Endothelial cell of umbilical vein (primary cell): ENCODE measurements at regions of chr11 and their contacts with region 1.

Region 1: GRCh38 chr11:126334659-126335462 is 20.6 kb upstream of the ST3GAL4 start:
- DNase-seq: no peak
- H3K4me3 ChIP-seq: no peak overlapping the region
- H3K27ac ChIP-seq: peak overlapping the region; percentile 95
- H3K4me1 ChIP-seq: peaks cover 32% of the 10 kb centered on the region
- H3K27me3 ChIP-seq: no peaks in the 10 kb centered on the region
- CTCF ChIP-seq: no peak
- POLR2A ChIP-seq: no peak

Region 2: GRCh38 chr11:126211235-126212088 is 123.4 kb before region 1 on chr11 and contains the starts of genes FAM118B and RPUSD4:
- CTCF ChIA-PET with region 1: no interaction called
- POLR2A ChIA-PET with region 1: no interaction called
- dilution Hi-C with region 1: no loop called
- intact Hi-C with region 1: no loop called
- DNase-seq: peak; percentile 98
- H3K4me3 ChIP-seq: peak within 1 kb of the TSS; percentile 65 to 73 (median 72)
- H3K27ac ChIP-seq: peak within 1 kb of the TSS; percentile 36
- H3K4me1 ChIP-seq: peaks cover 17% of the 10 kb centered on the region
- H3K27me3 ChIP-seq: no peaks in the 10 kb centered on the region
- CTCF ChIP-seq: no peak
- POLR2A ChIP-seq: peak; percentile 98
- total RNA-seq, gene FAM118B: 35.3 and 35.8 TPM in 2 replicates
- total RNA-seq, gene RPUSD4: 36.5 and 40.8 TPM in 2 replicates

Region 3: GRCh38 chr11:126345759-126346585 is 11.1 kb after region 1 on chr11:
- CTCF ChIA-PET with region 1: interaction called, 7 read pairs
- POLR2A ChIA-PET with region 1: interaction called, 4 read pairs
- dilution Hi-C with region 1: no loop called
- intact Hi-C with region 1: loop called (anchors 1 kb)
- DNase-seq: peak; percentile 59
- H3K4me3 ChIP-seq: no peak overlapping the region
- H3K27ac ChIP-seq: peak overlapping the region; percentile 77
- H3K4me1 ChIP-seq: peaks cover 50% of the 10 kb centered on the region
- H3K27me3 ChIP-seq: no peaks in the 10 kb centered on the region
- CTCF ChIP-seq: no peak
- POLR2A ChIP-seq: no peak

Region 4: GRCh38 chr11:126355324-126355925 is 20.6 kb after region 1 on chr11 and contains the start of gene ST3GAL4:
- CTCF ChIA-PET with region 1: interaction called, 4 read pairs
- POLR2A ChIA-PET with region 1: interaction called, 3 read pairs
- dilution Hi-C with region 1: no loop called
- intact Hi-C with region 1: loop called (anchors 1 kb)
- DNase-seq: peak; percentile 73
- H3K4me3 ChIP-seq: peak within 1 kb of the TSS; percentile 16 to 69 (median 64)
- H3K27ac ChIP-seq: peak within 1 kb of the TSS; percentile 79
- H3K4me1 ChIP-seq: peaks cover 23% of the 10 kb centered on the region
- H3K27me3 ChIP-seq: no peaks in the 10 kb centered on the region
- CTCF ChIP-seq: no peak
- POLR2A ChIP-seq: peak; percentile 82
- total RNA-seq, gene ST3GAL4: 17.7 and 21.1 TPM in 2 replicates

Region 5: DNA sequence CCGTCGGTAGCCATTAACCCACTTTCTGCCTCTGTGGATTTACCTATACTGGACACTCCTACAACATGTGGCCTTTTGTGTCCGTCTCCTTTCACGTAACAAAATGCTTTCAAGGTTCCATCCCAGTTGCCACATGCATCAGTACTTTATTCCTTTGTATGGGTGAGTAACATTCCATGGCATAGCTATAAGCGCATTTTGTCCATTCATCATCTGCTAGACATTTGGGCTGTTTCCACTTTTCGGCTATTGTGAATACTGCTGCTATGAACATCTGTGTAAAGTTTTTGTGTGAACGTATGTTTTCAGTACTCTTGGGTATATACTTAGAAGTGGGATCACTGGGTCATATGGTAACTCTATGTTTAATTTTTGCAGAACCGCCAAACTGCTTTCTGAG is 277.8 kb after region 1 on chr11:
- CTCF ChIA-PET with region 1: no interaction called
- POLR2A ChIA-PET with region 1: no interaction called
- dilution Hi-C with region 1: no loop called
- intact Hi-C with region 1: no loop called
- DNase-seq: no peak
- H3K4me3 ChIP-seq: no peak overlapping the region
- H3K27ac ChIP-seq: no peak overlapping the region
- H3K4me1 ChIP-seq: no peaks in the 10 kb centered on the region
- H3K27me3 ChIP-seq: no peaks in the 10 kb centered on the region
- CTCF ChIP-seq: no peak
- POLR2A ChIP-seq: no peak